HCT116 (cell line): ENCODE measurements at regions of chr17 and their contacts with region 1.

Region 1: GRCh38 chr17:7045909-7046724 is 2.2 kb upstream of the SLC16A11 start:
- DNase-seq: peak; percentile 71
- ATAC-seq: peak; percentile 82
- H3K4me3 ChIP-seq: peak overlapping the region; percentile 49 to 65
- H3K27ac ChIP-seq: peak overlapping the region; percentile 46
- H3K4me1 ChIP-seq: peaks cover 31 to 48% of the 10 kb centered on the region in 2 experiments
- H3K27me3 ChIP-seq: no peaks in the 10 kb centered on the region
- CTCF ChIP-seq: peak; percentile 69 to 96 (median 92)
- POLR2A ChIP-seq: no peak
- RAD21 ChIP-seq: peak; percentile 96

Region 2: DNA sequence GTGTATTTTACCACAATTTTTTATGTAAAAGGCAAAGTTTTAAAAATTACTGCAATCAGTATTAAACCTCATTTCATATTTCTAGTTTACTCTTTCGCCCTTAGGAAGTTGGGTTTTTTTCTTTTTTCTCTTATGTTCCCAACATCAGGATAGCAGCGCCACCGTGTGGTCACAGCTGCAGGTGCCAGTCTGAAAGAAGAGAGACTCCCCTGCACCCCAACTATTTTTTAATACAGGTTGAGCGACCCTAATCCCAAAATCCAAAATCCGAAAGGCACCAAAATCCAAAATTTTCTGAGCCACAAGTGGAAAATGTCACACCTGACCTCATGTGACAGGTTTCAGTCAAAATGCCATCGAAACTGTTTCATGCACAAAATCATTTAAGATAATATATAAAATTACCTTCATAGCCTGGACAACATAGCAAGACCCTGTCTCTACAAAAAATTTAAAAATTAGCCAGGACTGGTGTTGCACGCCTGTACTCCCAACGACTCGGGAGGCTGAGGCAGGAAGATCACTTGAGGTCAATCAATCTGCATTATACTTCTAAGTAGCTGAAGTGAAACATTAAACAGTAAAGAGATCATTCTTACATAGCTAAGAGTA is 90.3 kb after region 1 on chr17:
- CTCF ChIA-PET with region 1: interaction called, 62 read pairs
- POLR2A ChIA-PET with region 1: interaction called, 9 read pairs
- RAD21 ChIA-PET with region 1: interaction called, 5 to 8 read pairs
- intact Hi-C with region 1: loop called (anchors 1 kb)
- DNase-seq: peak; percentile 57
- ATAC-seq: peak; percentile 57
- H3K4me3 ChIP-seq: peak overlapping the region; percentile 33 to 52
- H3K27ac ChIP-seq: no peak overlapping the region
- H3K4me1 ChIP-seq: peaks cover 5 to 14% of the 10 kb centered on the region in 2 experiments
- H3K27me3 ChIP-seq: no peaks in the 10 kb centered on the region
- CTCF ChIP-seq: peak; percentile 91 to 99 (median 93)
- POLR2A ChIP-seq: no peak
- RAD21 ChIP-seq: peak; percentile 94

Region 3: DNA sequence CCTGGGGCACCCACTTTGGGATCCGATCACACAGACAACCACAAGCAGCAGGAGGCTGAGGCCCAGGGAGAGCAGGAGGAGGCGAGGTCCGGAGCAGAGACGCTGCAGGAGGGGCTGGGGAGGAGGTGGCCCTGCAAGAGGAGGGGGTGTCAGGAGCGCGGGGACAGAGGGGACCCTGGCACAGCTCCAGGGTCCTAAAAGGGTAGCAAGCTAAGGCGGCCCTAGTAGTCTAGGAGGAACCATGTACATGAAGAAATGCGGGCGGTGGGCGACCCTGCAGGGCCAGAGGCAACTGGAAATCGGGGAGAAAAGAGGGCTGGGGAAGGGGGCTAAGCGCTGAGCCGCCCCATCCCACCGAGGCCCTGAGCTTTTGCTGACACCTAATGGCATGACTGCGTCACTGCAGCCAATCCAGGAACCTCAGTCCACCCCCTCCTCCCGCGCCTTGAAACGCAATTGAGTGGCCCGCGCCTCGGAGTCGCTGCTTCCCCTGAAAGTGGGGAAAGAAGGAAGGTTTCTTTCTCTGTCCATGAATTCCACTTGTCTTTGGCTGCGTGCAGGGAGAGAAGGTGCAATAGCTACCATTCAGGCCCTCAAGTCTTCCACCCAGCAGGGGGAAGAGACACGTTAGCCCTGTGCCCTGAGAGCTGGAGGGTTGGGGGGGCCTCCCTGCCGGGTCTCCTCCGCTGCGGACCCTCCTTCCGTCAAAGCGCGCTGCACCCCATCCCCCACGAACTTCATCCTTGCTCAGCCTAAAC is 131.3 kb after region 1 on chr17:
- CTCF ChIA-PET with region 1: interaction called, 27 read pairs
- POLR2A ChIA-PET with region 1: no interaction called
- RAD21 ChIA-PET with region 1: interaction called, 4 to 11 read pairs
- intact Hi-C with region 1: no loop called
- DNase-seq: no peak
- ATAC-seq: peak; percentile 93
- H3K4me3 ChIP-seq: peak overlapping the region; percentile 43 to 58
- H3K27ac ChIP-seq: no peak overlapping the region; the same call in 1 of the 2 replicates
- H3K4me1 ChIP-seq: peaks cover 7 to 15% of the 10 kb centered on the region in 2 experiments
- H3K27me3 ChIP-seq: no peaks in the 10 kb centered on the region
- CTCF ChIP-seq: peak; percentile 55 to 91 (median 91); a peak in 5 of 6 replicates
- POLR2A ChIP-seq: no peak
- RAD21 ChIP-seq: peak; percentile 84

Region 4: DNA sequence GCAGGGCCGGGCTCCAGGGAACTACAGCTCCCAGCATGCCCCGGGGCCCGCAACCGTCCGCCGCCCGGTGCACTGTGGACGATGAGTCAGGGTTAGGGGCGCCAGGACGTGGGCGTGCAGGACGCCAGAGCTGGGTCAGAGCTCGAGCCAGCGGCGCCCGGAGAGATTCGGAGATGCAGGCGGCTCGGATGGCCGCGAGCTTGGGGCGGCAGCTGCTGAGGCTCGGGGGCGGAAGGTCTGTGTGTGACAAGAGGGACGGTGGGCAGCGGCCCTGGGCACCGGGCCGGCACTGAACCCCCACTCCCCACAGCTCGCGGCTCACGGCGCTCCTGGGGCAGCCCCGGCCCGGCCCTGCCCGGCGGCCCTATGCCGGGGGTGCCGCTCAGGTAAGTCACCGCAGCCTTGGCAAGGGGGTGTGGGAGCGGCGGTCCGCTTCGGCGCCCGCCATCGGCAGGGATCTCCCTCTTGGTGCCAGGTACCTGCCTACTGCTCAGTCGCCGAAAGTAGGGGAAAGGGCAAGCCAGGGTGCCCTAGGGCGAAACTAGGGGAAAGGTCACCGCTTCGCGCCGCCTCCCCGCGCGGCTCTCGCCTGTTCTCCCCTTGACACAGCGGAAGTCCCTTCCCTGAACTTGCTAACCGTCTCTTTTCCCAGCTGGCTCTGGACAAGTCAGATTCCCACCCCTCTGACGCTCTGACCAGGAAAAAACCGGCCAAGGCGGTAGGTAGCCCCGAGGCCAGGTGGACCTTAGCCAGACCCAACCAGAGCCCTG is 173.9 kb after region 1 on chr17 and contains the starts of genes ACADVL and DLG4:
- CTCF ChIA-PET with region 1: interaction called, 22 read pairs
- POLR2A ChIA-PET with region 1: interaction called, 9 read pairs
- RAD21 ChIA-PET with region 1: no interaction called
- intact Hi-C with region 1: no loop called
- DNase-seq: no peak
- ATAC-seq: peak; percentile 71
- H3K4me3 ChIP-seq: peak within 1 kb of the TSS; percentile 69 to 75
- H3K27ac ChIP-seq: peak within 1 kb of the TSS; percentile 99
- H3K4me1 ChIP-seq: peaks cover 12 to 54% of the 10 kb centered on the region in 2 experiments; a peak in 3 of 4 replicates
- H3K27me3 ChIP-seq: no peaks in the 10 kb centered on the region
- CTCF ChIP-seq: no peak
- POLR2A ChIP-seq: peak; percentile 61
- RAD21 ChIP-seq: no peak
- total RNA-seq, gene ACADVL: 554 TPM
- total RNA-seq, gene DLG4: 15.0 TPM

Region 5: DNA sequence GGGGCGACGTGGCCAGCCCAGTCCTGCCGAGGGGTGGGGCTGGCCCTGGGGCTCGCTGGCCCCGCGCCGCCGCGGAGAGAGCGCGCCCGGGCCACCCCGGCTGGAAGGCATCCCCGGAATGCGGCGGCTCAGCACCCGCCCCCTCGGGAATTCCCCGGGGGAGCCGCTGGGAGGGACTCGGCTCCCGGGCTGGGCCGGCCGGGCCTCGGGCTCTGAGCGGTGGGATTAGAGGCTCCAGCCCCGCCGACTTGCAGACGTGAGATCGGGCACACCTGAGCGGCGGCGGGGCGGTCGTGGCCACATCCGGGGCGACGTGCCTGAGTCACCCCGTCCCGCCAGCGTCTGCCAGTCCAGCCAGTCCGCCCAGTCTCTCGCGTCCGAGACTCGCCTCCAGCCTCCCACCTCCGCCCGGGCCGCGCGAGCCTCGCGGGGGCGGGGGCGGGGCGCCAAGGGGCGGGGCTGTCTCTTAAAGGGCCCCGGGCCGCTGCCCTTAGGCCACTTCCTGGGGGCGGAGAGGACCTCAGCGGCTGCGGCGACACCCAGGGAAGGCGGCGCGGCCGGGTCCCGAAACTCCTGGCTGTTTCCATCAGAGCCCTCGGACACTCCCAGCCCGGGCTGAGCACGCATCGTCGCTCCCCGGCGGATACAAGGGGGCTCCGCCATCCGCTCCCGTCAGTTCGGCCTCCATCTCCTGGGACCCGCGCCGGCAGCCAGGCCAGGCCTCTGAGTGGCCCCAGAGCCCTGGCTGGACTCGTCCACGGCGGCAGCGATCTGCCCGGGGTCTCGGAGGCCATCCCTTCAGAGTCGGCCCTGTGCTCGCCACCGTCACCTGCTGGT is 305.8 kb after region 1 on chr17 and contains the start of gene KCTD11:
- CTCF ChIA-PET with region 1: interaction called, 3 read pairs
- POLR2A ChIA-PET with region 1: no interaction called
- RAD21 ChIA-PET with region 1: no interaction called
- intact Hi-C with region 1: loop called (anchors 5 kb)
- DNase-seq: peak; percentile 79
- ATAC-seq: peak; percentile 76
- H3K4me3 ChIP-seq: peak within 1 kb of the TSS; percentile 79 to 89
- H3K27ac ChIP-seq: peak within 1 kb of the TSS; percentile 99
- H3K4me1 ChIP-seq: peaks cover 29 to 69% of the 10 kb centered on the region in 2 experiments
- H3K27me3 ChIP-seq: no peaks in the 10 kb centered on the region
- CTCF ChIP-seq: peak in 1 of 3 experiments; percentile 60; a peak in 2 of 6 replicates
- POLR2A ChIP-seq: peak; percentile 49
- RAD21 ChIP-seq: no peak
- total RNA-seq, gene KCTD11: 5.4 TPM

Region 6: GRCh38 chr17:7687908-7688807 is 642.0 kb after region 1 on chr17 and contains the start of gene WRAP53:
- CTCF ChIA-PET with region 1: interaction called, 5 read pairs
- POLR2A ChIA-PET with region 1: no interaction called
- RAD21 ChIA-PET with region 1: no interaction called
- intact Hi-C with region 1: loop called (anchors 5 kb)
- DNase-seq: peak; percentile 99
- ATAC-seq: peak; percentile 91
- H3K4me3 ChIP-seq: peak within 1 kb of the TSS; percentile 86 to 100
- H3K27ac ChIP-seq: peak within 1 kb of the TSS; percentile 89
- H3K4me1 ChIP-seq: peaks cover 26 to 33% of the 10 kb centered on the region in 2 experiments
- H3K27me3 ChIP-seq: no peaks in the 10 kb centered on the region
- CTCF ChIP-seq: peak; percentile 93 to 99 (median 99)
- POLR2A ChIP-seq: peak; percentile 73
- RAD21 ChIP-seq: peak; percentile 87
- total RNA-seq, gene WRAP53: 28.8 TPM